Common myeloid progenitor, CD34-positive (primary cell): ENCODE measurements at regions of chr2 and their contacts with region 1.

Region 1: GRCh38 chr2:33475224-33476130 is 972 bp upstream of the RASGRP3 start:
- DNase-seq: peak; percentile 91 to 94 (median 94)
- H3K4me3 ChIP-seq: peak overlapping the region; percentile 25 to 88 (median 69)
- H3K27ac ChIP-seq: peak overlapping the region; percentile 67 to 93
- H3K4me1 ChIP-seq: peaks cover 25 to 49% (median 39%) of the 10 kb centered on the region in 4 experiments
- H3K27me3 ChIP-seq: no peaks in the 10 kb centered on the region

Region 2: GRCh38 chr2:33051586-33052360 is 423.7 kb before region 1 on chr2:
- CTCF ChIA-PET with region 1: no interaction called
- POLR2A ChIA-PET with region 1: no interaction called
- DNase-seq: no peak
- H3K4me3 ChIP-seq: no peak overlapping the region
- H3K27ac ChIP-seq: no peak overlapping the region
- H3K4me1 ChIP-seq: no peaks in the 10 kb centered on the region
- H3K27me3 ChIP-seq: no peaks in the 10 kb centered on the region

Region 3: GRCh38 chr2:33497221-33497650 is 21.8 kb after region 1 on chr2:
- CTCF ChIA-PET with region 1: interaction called, 24 read pairs
- POLR2A ChIA-PET with region 1: interaction called, 3 read pairs
- DNase-seq: peak; percentile 91 to 98 (median 97)
- H3K4me3 ChIP-seq: peak overlapping the region in 2 of 7 experiments; percentile 1 to 26
- H3K27ac ChIP-seq: peak overlapping the region; percentile 10 to 57
- H3K4me1 ChIP-seq: peaks cover 28 to 70% (median 60%) of the 10 kb centered on the region in 4 experiments
- H3K27me3 ChIP-seq: no peaks in the 10 kb centered on the region